Ovary (tissue), 10 donors: ENCODE measurements at regions of chr6 and their contacts with region 1.

Region 1: DNA sequence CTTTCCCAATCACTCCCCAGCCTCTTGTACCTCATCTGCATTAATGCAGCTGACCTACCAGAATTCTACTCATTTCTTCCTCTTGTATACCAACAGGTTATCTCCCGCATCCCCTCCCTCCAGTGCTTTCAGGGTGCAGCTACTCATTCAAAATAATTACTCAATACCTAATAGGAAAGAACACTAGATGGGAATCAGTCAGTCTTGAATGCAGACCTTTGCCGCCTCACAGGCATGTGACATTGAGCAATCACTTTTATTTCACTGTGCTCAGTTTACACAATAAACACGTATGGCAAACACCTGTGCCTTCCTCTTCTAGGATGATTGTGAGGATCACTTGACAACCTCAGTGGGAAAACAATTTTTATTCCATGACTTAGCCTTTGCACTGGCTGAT is 13.3 kb downstream of the ZSCAN31 start:
- DNase-seq: no peak
- H3K4me3 ChIP-seq: no peak overlapping the region
- H3K27ac ChIP-seq: no peak overlapping the region
- H3K4me1 ChIP-seq: no peaks in the 10 kb centered on the region
- H3K27me3 ChIP-seq: no peaks in the 10 kb centered on the region
- CTCF ChIP-seq: no peak
- EP300 ChIP-seq: no peak
- POLR2A ChIP-seq: no peak

Region 2: GRCh38 chr6:28281288-28282064 is 41.2 kb before region 1 on chr6 and contains the start of gene PGBD1:
- intact Hi-C with region 1: loop called in 2 of 4 experiments (anchors 5 to 10 kb)
- DNase-seq: peak; percentile 45 to 82 (median 56)
- H3K4me3 ChIP-seq: peak within 1 kb of the TSS; percentile 44
- H3K27ac ChIP-seq: no peak within 1 kb of the TSS
- H3K4me1 ChIP-seq: peaks cover 3% of the 10 kb centered on the region
- H3K27me3 ChIP-seq: no peaks in the 10 kb centered on the region
- CTCF ChIP-seq: no peak
- EP300 ChIP-seq: no peak
- POLR2A ChIP-seq: no peak
- total RNA-seq, gene PGBD1: 2.1 to 5.0 (median 3.5) TPM

Region 3: DNA sequence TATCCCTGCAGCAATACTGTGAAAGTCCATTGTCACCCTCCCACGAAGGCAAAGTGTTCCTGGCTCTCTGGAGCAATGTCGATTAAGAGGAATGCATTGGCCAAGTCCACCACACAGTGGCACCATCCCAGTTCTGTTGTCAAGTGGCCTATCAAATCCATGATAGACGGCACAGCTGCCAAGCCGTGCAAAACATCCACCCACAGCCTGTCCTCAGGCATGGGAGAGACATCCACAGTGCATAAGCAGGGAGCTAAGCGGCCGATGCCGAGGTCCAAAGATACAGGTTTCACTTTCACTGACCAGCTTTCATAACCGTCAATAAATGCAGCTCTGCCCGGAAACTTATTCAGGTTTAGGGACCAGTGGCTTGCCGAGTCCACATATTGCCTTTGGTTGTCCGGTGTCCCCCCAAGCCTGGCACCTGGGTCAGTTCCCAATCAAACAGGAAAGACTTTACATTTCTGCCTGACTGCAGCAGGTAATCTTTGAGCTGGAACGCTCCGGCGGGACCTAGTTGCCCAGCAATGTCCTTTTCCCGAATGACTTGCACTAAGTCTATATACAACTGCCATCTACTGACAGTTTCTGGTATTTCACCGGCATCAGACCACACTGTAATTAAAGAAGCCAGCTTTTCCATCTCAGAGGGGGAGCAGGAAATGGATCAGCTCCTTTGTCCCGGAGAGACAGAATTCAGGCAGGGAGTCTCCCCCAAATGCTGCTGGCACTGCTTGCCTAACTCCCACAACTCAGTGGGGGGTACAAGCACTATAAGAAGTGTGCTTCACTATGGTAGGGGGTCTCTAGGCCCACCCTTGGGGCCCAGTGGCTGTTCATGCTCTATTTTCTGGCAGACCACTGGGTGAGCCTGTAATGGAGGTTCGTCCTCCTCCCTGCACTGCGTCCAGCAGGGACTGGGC is 33.3 kb after region 1 on chr6:
- intact Hi-C with region 1: no loop called
- DNase-seq: peak; percentile 70 to 80 (median 72)
- H3K4me3 ChIP-seq: peak overlapping the region; percentile 56
- H3K27ac ChIP-seq: peak overlapping the region; percentile 26 to 75
- H3K4me1 ChIP-seq: peaks cover 4% of the 10 kb centered on the region
- H3K27me3 ChIP-seq: no peaks in the 10 kb centered on the region
- CTCF ChIP-seq: peak; percentile 73 to 82 (median 80)
- EP300 ChIP-seq: no peak
- POLR2A ChIP-seq: no peak